ENCODE measurements at regions of chr6 and their contacts with region 1.

Region 1: GRCh38 chr6:111259089-111259831 is 172.0 kb downstream of the SLC16A10 start:
- DNase-seq: peak; percentile 99
- ATAC-seq: peak; percentile 97
- H3K4me3 ChIP-seq: peak overlapping the region; percentile 72
- H3K27ac ChIP-seq: peak overlapping the region; percentile 90
- H3K4me1 ChIP-seq: no peaks in the 10 kb centered on the region
- H3K27me3 ChIP-seq: no peaks in the 10 kb centered on the region
- CTCF ChIP-seq: peak; percentile 95 to 99 (median 97); a peak in 5 of 6 replicates
- EP300 ChIP-seq: peak in 1 of 2 experiments; percentile 88; a peak in 2 of 4 replicates
- POLR2A ChIP-seq: peak; percentile 95
- RAD21 ChIP-seq: peak; percentile 93

Region 2: GRCh38 chr6:111329882-111330633 is 70.8 kb after region 1 on chr6:
- CTCF ChIA-PET with region 1: interaction called, 11 read pairs
- POLR2A ChIA-PET with region 1: interaction called, 6 read pairs
- RAD21 ChIA-PET with region 1: interaction called, 8 read pairs
- SMC1A ChIA-PET with region 1: interaction called, 10 read pairs
- in situ Hi-C with region 1: no loop called
- intact Hi-C with region 1: loop called (anchors 5 kb)
- DNase-seq: peak; percentile 49
- ATAC-seq: peak; percentile 98
- H3K4me3 ChIP-seq: no peak overlapping the region
- H3K27ac ChIP-seq: peak overlapping the region; percentile 24; the same call in 1 of the 2 replicates
- H3K4me1 ChIP-seq: peaks cover 3% of the 10 kb centered on the region; the same call in 1 of the 2 replicates
- H3K27me3 ChIP-seq: no peaks in the 10 kb centered on the region
- CTCF ChIP-seq: no peak
- EP300 ChIP-seq: peak; percentile 43 to 47; a peak in 1 of 4 replicates
- POLR2A ChIP-seq: no peak
- RAD21 ChIP-seq: 0 out of 2 replicates have a peak, but pooled peaks have one; percentile 5

Region 3: GRCh38 chr6:111388681-111389080 is 129.4 kb after region 1 on chr6:
- CTCF ChIA-PET with region 1: interaction called, 14 read pairs
- POLR2A ChIA-PET with region 1: interaction called, 3 read pairs
- RAD21 ChIA-PET with region 1: interaction called, 16 read pairs
- SMC1A ChIA-PET with region 1: interaction called, 8 read pairs
- in situ Hi-C with region 1: no loop called
- intact Hi-C with region 1: no loop called
- DNase-seq: no peak
- ATAC-seq: no peak
- H3K4me3 ChIP-seq: no peak overlapping the region
- H3K27ac ChIP-seq: no peak overlapping the region
- H3K4me1 ChIP-seq: no peaks in the 10 kb centered on the region
- H3K27me3 ChIP-seq: no peaks in the 10 kb centered on the region
- CTCF ChIP-seq: no peak
- EP300 ChIP-seq: no peak
- POLR2A ChIP-seq: no peak
- RAD21 ChIP-seq: no peak

Region 4: GRCh38 chr6:111483736-111484632 is 224.7 kb after region 1 on chr6:
- CTCF ChIA-PET with region 1: interaction called, 215 read pairs
- POLR2A ChIA-PET with region 1: interaction called, 52 read pairs
- RAD21 ChIA-PET with region 1: interaction called, 263 read pairs
- SMC1A ChIA-PET with region 1: interaction called, 153 read pairs
- in situ Hi-C with region 1: loop called (anchors 5 kb)
- intact Hi-C with region 1: loop called (anchors 1 kb)
- DNase-seq: peak; percentile 69
- ATAC-seq: peak; percentile 69
- H3K4me3 ChIP-seq: peak overlapping the region; percentile 88
- H3K27ac ChIP-seq: peak overlapping the region; percentile 98
- H3K4me1 ChIP-seq: peaks cover 17% of the 10 kb centered on the region
- H3K27me3 ChIP-seq: no peaks in the 10 kb centered on the region
- CTCF ChIP-seq: no peak
- EP300 ChIP-seq: peak; percentile 16 to 34; a peak in 1 of 4 replicates
- POLR2A ChIP-seq: peak; percentile 92
- RAD21 ChIP-seq: no peak

Region 5: GRCh38 chr6:111605100-111605751 is 346.0 kb after region 1 on chr6:
- CTCF ChIA-PET with region 1: interaction called, 21 read pairs
- POLR2A ChIA-PET with region 1: interaction called, 8 read pairs
- RAD21 ChIA-PET with region 1: interaction called, 34 read pairs
- SMC1A ChIA-PET with region 1: interaction called, 15 read pairs
- in situ Hi-C with region 1: no loop called
- intact Hi-C with region 1: loop called (anchors 10 kb)
- DNase-seq: no peak
- ATAC-seq: peak; percentile 65
- H3K4me3 ChIP-seq: peak overlapping the region; percentile 74
- H3K27ac ChIP-seq: peak overlapping the region; percentile 87
- H3K4me1 ChIP-seq: peaks cover 11% of the 10 kb centered on the region; the same call in 1 of the 2 replicates
- H3K27me3 ChIP-seq: no peaks in the 10 kb centered on the region
- CTCF ChIP-seq: no peak
- EP300 ChIP-seq: no peak
- POLR2A ChIP-seq: no peak
- RAD21 ChIP-seq: no peak

Region 6: DNA sequence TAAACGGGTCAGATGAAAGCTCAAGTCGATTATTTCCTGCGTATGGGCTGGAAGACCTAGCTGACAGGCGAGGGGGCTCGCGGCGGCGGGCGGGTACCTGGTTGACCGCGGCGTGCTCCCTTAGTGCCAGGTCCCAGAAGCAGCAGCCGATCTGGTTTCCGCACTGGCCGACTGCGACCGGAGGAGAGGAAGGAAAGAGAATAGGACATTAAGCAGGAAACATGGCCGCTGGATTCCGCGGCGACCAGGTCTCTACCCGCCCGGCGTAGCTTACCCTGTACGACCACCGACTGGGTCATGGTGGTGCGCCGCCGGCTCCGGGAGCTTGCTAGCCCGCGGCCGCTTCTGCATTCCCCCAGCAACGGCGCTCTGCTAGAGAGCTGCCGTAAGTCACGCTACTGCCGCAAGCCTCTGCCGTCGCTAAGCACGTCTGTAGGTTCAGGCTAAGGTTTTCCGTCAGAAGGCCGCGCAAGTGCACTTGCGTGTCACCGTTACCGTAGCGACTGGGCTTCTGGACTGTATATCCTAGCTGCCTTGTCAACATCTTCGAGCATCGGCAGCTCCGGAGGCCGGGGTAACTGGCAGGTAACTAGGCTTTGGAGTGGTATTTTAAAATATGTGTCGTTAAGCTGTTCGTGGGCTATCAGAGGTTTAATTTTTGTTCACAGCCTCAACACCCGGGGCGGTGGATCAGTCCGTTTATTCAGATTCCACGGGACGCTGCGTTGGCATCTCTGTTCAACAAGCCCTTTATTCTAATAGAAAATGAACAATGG is 828.1 kb after region 1 on chr6 and contains the starts of genes FAM229B and TUBE1:
- CTCF ChIA-PET with region 1: no interaction called
- POLR2A ChIA-PET with region 1: no interaction called
- RAD21 ChIA-PET with region 1: no interaction called
- SMC1A ChIA-PET with region 1: interaction called, 12 read pairs
- in situ Hi-C with region 1: no loop called
- intact Hi-C with region 1: no loop called
- DNase-seq: peak; percentile 79
- ATAC-seq: peak; percentile 98
- H3K4me3 ChIP-seq: peak within 1 kb of the TSS; percentile 88
- H3K27ac ChIP-seq: peak within 1 kb of the TSS; percentile 49
- H3K4me1 ChIP-seq: no peaks in the 10 kb centered on the region
- H3K27me3 ChIP-seq: peaks cover 0 to 4% of the 10 kb centered on the region in 2 experiments; a peak in 1 of 4 replicates
- CTCF ChIP-seq: 0 out of 6 replicates have a peak, but pooled peaks of 1 of the 3 experiments have one; percentile 1
- EP300 ChIP-seq: no peak
- POLR2A ChIP-seq: peak; percentile 89
- RAD21 ChIP-seq: no peak
- polyA plus RNA-seq, gene FAM229B: 5.3 to 5.7 TPM
- polyA plus RNA-seq, gene TUBE1: 6.3 to 8.6 TPM

Measured in GM12878 (cell line).